Dendritic cell treated with granulocyte-macrophage colony-stimulating factor and Interleukin-4, amounts not matched to agents 40 ng/mL and 50 ng/mL, for 4 days (primary cell): ENCODE measurements at regions of chr10 and their contacts with region 1.

Region 1: DNA sequence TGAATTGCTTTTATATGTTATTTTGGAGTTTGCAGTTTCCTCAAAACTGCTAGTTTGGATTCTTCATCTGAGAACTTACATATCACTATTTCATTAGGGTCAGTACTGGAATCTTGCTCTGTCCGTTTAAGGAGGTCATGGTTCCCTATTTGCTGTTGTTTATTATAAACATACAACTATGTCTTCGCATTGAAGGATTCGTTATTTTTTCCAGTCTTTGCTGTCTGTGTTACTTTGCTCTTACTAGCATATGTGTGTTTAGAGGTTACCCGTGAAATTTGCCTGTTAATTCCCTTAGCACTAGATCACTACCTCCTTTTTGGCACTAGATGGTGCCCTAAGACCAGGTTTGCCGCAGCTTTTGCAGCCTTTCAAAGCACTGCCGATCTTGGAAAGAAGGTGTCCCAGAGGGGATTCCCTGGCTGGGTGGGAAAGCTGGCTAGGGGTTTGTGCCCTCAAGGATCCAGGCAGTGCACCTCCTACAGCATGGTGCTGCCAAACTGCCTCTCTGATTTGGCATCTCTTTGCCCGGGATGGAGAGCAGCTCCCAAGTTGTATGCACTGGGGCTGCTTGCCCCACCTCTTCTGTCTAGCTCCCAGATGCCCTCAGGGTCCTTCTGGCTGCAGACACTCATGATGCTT is 103.1 kb upstream of the APBB1IP start:
- H3K4me3 Mint-ChIP-seq: peak overlapping the region; percentile 69
- H3K27ac Mint-ChIP-seq: peak overlapping the region; percentile 70
- H3K4me1 Mint-ChIP-seq: peaks cover 16% of the 10 kb centered on the region
- H3K27me3 Mint-ChIP-seq: no peaks in the 10 kb centered on the region

Region 2: DNA sequence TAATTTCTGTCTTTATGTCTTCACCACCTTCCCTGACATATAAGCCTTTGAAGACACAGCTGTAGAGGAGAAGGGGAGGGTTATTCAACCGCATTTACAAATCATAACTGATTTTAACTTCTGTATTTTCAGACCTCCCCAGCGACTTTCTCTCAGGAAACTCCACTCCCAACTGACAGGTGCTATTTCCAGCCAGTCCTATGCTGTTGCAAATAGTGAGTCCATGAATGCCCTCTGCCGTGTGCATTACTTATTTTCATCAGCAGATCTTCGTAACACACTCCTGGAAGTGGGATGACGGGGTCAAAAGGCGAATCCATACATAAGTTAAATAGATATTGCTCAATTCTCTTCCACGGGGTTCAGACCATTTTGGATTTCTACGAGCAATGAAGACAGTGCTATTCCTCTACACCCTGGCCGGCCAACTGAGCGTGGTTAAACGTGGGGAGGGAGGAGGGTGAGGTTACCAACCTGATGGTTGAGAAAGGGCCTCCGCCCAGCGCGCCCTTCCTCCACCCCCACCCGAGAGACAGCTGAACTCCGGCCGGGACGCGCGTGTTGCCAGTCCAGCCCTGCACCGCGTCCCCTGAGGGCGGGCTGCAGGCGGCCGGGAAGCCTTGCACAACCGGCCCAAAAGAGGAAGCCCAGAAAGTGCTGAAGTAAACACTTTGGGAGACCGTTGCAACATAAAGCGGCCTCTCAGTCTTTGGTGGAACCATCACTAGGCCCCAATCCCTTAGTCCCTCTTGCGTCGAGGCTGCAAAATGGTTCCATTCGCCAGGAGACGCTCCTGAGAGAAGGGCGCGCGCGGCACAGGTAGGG is 102.8 kb after region 1 on chr10 and contains the start of gene APBB1IP:
- intact Hi-C with region 1: loop called (anchors 5 kb)
- H3K4me3 Mint-ChIP-seq: peak within 1 kb of the TSS; percentile 94
- H3K27ac Mint-ChIP-seq: peak within 1 kb of the TSS; percentile 97
- H3K4me1 Mint-ChIP-seq: peaks cover 53% of the 10 kb centered on the region
- H3K27me3 Mint-ChIP-seq: no peaks in the 10 kb centered on the region

Region 3: DNA sequence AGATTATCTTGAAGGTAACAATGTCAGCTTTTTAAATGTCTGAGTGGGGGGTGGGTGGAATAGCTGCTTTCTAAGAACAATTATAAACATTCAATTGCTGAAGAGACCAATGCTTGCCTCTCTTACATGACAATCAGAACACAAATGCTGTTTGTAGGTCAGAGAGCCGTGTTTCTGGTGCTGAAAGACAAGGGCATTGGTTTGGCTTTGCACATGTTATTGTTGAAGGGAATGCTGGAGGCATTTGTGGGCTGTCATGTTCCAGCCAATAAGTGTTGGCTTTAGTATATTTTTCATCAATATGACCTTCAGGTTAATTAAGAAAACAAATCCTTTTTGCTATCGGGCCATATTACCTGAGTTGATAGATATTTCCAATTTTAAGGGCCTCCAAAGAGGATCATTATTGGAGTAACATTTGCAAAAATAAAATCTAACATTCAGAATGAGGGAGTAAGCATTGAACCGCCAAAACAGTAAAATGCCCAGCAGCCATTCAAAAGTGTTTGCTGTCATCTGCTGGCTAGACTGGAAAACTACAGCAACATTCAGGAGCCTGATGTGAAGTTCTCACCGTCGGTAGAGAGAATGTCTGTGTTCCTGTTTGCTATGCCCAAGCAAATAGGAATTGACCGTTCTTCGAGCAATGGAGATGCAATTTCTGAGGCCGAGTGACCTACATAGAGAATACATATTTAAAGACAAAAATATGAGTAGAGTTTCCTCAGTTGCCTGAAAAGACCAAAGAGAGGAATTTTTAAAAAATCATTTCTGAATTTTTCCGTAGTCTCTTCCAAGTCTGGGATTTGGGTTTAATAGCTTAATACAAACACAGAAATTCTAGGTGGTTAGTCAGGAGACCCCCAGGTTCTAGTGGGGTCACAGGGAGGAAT is 221.9 kb after region 1 on chr10:
- intact Hi-C with region 1: loop called (anchors 1 kb)
- H3K4me3 Mint-ChIP-seq: no peak overlapping the region
- H3K27ac Mint-ChIP-seq: no peak overlapping the region
- H3K4me1 Mint-ChIP-seq: peaks cover 43% of the 10 kb centered on the region
- H3K27me3 Mint-ChIP-seq: no peaks in the 10 kb centered on the region

Region 4: DNA sequence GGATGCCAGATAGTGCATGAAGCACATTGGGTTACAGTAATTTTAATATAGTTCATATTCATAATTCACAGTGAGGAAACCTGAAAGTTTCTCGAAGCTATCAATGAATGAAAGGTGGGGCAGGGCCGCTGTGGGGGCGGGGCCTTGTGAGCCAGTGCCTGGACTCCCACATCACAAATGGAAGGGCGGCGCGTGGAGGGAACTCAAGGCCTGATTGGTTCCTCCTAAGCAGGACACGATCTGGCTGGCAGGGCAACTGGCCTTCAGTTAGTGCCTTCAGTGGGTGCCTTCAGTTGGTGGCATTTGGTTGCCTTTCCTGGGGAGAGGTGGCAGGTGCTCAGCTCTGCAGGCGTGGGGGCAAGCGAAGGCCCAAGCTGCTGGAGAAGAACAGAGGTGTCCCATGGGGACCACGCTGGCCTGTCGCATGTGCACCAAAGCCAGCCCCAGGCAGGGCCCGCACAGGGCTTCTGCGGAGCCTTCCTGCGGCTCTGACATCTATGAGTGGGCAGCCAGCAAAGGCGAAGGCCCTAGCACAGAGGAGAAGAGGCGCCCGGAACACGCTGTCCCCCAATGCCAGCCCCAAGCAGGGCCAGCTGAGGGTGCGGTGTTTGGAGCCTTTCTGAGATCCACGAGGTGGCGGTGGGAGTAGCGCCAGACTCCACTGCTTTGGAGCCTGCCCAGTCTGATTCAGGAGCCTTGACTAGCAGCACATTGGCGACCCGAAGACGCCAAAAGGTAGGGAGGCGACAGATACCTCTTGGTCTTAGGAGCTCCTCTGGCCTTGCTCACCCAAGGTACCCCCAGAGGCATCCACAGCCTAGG is 244.4 kb after region 1 on chr10:
- intact Hi-C with region 1: no loop called
- H3K4me3 Mint-ChIP-seq: no peak overlapping the region
- H3K27ac Mint-ChIP-seq: no peak overlapping the region
- H3K4me1 Mint-ChIP-seq: peaks cover 19% of the 10 kb centered on the region
- H3K27me3 Mint-ChIP-seq: no peaks in the 10 kb centered on the region

Region 5: DNA sequence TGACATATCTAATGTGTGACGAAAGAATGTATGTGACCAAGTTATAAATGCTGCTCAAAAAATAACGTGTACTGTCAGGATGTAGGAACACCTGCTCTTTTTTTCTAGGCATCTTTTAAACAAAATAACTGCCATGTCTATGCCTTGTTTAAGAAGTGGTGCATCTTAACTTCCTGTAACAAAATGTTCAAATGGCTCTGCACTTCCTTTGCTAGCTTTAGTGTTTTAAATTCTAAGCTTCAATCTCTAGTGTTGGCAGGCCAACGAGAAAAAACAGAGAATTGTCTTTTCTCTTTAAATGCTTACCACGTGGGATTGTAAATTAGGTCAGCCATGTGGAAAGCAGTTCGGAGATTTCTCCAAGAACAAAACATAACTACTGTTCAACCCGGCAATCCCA is 347.9 kb after region 1 on chr10:
- intact Hi-C with region 1: loop called (anchors 10 kb)
- H3K4me3 Mint-ChIP-seq: no peak overlapping the region
- H3K27ac Mint-ChIP-seq: no peak overlapping the region
- H3K4me1 Mint-ChIP-seq: peaks cover 27% of the 10 kb centered on the region
- H3K27me3 Mint-ChIP-seq: no peaks in the 10 kb centered on the region

Region 6: GRCh38 chr10:26725837-26726727 is 391.0 kb after region 1 on chr10:
- intact Hi-C with region 1: loop called (anchors 5 kb)
- H3K4me3 Mint-ChIP-seq: no peak overlapping the region
- H3K27ac Mint-ChIP-seq: peak overlapping the region; percentile 34
- H3K4me1 Mint-ChIP-seq: peaks cover 17% of the 10 kb centered on the region
- H3K27me3 Mint-ChIP-seq: no peaks in the 10 kb centered on the region

Region 7: DNA sequence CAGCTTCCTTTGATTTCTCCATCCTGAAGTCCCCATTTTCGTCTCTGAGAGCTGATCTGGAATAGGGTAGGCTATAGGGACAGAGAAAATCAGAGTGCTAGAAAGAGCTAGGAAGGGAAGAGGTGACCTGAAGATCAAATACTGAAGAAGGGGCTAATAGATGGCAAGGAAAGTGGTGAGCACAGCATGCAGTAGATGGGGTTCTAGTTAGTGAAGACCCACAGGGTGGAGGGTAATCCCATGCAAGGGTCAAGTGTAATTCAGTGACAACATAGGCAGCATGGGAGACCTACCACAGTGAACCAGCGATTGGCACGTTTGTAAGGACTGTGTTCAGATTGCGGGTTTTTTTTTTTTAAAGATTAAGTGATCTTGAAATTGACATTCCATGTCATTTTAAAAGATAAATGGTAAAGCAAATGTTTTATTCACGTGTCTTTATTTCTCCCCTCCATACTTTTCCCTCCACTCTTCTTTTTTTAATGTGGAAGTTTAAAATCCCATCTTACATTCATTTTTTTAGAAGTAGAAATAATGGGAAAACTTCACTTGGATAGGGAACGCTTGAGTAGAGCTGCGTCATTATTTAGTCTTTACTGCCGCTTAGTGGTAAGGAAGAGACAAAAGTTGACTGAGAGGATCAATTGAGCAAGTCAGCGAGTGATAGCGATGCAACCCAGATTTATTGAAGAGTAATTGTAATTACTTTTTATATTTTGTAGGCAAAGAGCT is 546.7 kb after region 1 on chr10:
- intact Hi-C with region 1: loop called (anchors 5 kb)
- H3K4me3 Mint-ChIP-seq: no peak overlapping the region
- H3K27ac Mint-ChIP-seq: no peak overlapping the region
- H3K4me1 Mint-ChIP-seq: peaks cover 5% of the 10 kb centered on the region
- H3K27me3 Mint-ChIP-seq: peaks cover 12% of the 10 kb centered on the region